Activated CD4-positive, alpha-beta T cell treated with anti-CD3 and anti-CD28 coated beads for 36 hours (primary cell): ENCODE measurements at regions of chr12 and their contacts with region 1.

Region 1: GRCh38 chr12:29088611-29089219 is 60.4 kb upstream of the FAR2 start:
- DNase-seq: no peak
- ATAC-seq: no peak
- H3K4me3 Mint-ChIP-seq: no peak overlapping the region
- H3K27ac Mint-ChIP-seq: no peak overlapping the region
- H3K4me1 Mint-ChIP-seq: no peaks in the 10 kb centered on the region
- H3K27me3 Mint-ChIP-seq: peaks cover 13% of the 10 kb centered on the region

Region 2: GRCh38 chr12:29241821-29242591 is 153.3 kb after region 1 on chr12:
- CTCF ChIA-PET with region 1: no interaction called
- POLR2A ChIA-PET with region 1: no interaction called
- intact Hi-C with region 1: loop called in 1 of 2 experiments (anchors 5 kb)
- DNase-seq: peak; percentile 42
- ATAC-seq: peak; percentile 93
- H3K4me3 Mint-ChIP-seq: no peak overlapping the region
- H3K27ac Mint-ChIP-seq: no peak overlapping the region
- H3K4me1 Mint-ChIP-seq: peaks cover 21% of the 10 kb centered on the region
- H3K27me3 Mint-ChIP-seq: no peaks in the 10 kb centered on the region

Region 3: DNA sequence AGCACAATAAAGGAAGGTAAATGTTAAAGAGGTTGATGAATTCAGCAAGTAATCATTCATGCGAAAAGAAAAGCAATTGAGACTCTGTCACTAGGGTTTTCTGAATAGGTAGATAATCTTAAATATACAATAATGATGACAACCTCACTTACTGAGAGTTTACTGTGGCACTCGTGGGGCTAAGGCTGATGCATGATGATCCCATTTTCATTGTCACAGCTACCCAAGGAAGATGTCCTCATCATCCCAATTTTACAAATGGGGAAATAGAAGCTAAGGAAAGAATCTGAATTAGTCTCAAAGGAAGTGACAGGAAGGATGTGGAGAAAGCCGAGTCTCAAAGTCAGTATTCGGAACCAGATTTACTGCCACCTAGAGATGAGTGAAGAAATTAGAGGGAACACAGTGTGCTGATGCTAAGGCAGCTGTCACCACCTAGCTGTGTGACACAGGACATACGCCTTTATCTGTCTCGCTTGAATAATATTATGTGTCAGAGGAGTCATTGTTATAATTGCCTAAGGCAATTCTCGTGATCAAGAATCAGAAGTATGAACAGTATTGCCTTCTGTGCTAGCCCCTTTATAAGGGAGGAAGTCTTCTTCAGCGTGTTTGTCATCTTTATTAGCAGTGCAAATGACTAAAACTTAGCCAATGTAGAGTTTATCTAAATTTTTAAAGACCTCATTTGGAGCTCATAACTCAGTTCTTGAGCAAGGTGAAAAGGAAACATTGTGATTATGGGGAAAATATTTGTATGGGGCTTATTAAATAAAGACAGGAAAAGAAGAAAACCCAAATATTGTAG is 229.0 kb after region 1 on chr12:
- CTCF ChIA-PET with region 1: interaction called, 31 read pairs
- POLR2A ChIA-PET with region 1: no interaction called
- intact Hi-C with region 1: loop called (anchors 1 to 2 kb)
- DNase-seq: peak; percentile 63
- ATAC-seq: peak; percentile 100
- H3K4me3 Mint-ChIP-seq: no peak overlapping the region
- H3K27ac Mint-ChIP-seq: no peak overlapping the region
- H3K4me1 Mint-ChIP-seq: peaks cover 6% of the 10 kb centered on the region
- H3K27me3 Mint-ChIP-seq: no peaks in the 10 kb centered on the region

Region 4: DNA sequence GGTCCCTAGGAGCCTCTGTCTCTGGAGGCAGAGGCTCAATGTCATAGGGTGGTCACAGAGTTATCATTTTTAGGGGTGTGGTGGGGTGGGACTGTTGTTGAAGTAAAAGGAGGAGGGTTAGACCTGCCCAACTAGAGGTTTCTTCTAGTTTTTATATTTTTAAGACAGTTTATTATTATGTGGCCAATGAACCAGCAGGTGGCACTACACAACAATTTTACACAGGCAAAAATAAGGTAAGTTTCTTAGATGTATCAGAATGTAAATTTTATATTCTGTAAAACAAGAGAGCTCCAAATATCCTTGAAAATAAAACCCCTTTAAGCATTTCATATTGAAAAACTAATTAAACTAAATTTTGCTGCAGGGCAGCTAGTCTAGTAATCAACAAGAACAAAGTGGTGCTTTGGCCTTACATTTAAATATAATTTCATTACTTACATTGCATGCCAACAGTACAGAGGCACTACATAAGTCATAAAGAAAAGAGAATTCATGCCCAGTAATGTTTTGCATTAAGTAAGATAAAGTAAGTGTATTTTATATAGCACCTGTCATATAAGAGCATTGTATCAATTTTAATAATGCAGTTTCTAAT is 431.0 kb after region 1 on chr12:
- CTCF ChIA-PET with region 1: no interaction called
- POLR2A ChIA-PET with region 1: no interaction called
- intact Hi-C with region 1: loop called in 1 of 2 experiments (anchors 10 kb)
- DNase-seq: peak; percentile 39
- ATAC-seq: no peak
- H3K4me3 Mint-ChIP-seq: no peak overlapping the region
- H3K27ac Mint-ChIP-seq: no peak overlapping the region
- H3K4me1 Mint-ChIP-seq: no peaks in the 10 kb centered on the region
- H3K27me3 Mint-ChIP-seq: peaks cover 6% of the 10 kb centered on the region